HAP-1 (cell line): ENCODE measurements at regions of chr2 and their contacts with region 1.

Region 1: GRCh38 chr2:11411768-11412448 is 54.1 kb downstream of the E2F6 start:
- DNase-seq: peak; percentile 49 to 76
- H3K4me3 ChIP-seq: peak overlapping the region; percentile 19
- H3K4me1 ChIP-seq: no peaks in the 10 kb centered on the region
- H3K27me3 ChIP-seq: no peaks in the 10 kb centered on the region

Region 2: DNA sequence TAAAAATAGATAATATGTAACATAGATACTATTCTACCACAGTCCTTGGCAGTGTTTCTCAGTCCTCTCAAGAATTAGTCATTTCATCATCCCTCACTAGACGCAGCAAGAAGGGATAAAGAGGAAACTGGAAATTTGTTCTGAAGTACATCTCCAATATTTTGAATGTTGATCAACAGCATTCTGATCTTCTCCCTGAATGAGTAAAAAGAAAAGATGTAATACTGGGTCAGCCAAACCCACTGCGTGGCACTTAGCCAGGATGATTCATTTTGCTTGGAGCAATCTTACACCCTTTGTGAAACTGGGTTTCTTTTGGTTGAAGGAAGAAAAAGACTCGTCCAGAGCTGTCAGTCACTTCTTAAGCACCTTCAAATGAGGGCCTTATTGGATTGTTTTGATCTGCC is 1514.6 kb before region 1 on chr2:
- in situ Hi-C with region 1: no loop called
- DNase-seq: peak; percentile 85 to 93
- H3K4me3 ChIP-seq: no peak overlapping the region
- H3K4me1 ChIP-seq: peaks cover 46% of the 10 kb centered on the region
- H3K27me3 ChIP-seq: no peaks in the 10 kb centered on the region

Region 3: GRCh38 chr2:10832203-10832936 is 579.5 kb before region 1 on chr2:
- in situ Hi-C with region 1: loop called (anchors 25 kb)
- DNase-seq: peak; percentile 82 to 88
- H3K4me3 ChIP-seq: no peak overlapping the region
- H3K4me1 ChIP-seq: peaks cover 6% of the 10 kb centered on the region
- H3K27me3 ChIP-seq: peaks cover 34% of the 10 kb centered on the region

Region 4: GRCh38 chr2:10971881-10972260 is 440.0 kb before region 1 on chr2:
- in situ Hi-C with region 1: no loop called
- DNase-seq: no peak
- H3K4me3 ChIP-seq: no peak overlapping the region
- H3K4me1 ChIP-seq: peaks cover 11% of the 10 kb centered on the region
- H3K27me3 ChIP-seq: no peaks in the 10 kb centered on the region

Region 5: GRCh38 chr2:11234309-11234708 is 177.6 kb before region 1 on chr2:
- in situ Hi-C with region 1: loop called (anchors 25 kb)
- DNase-seq: no peak
- H3K4me3 ChIP-seq: no peak overlapping the region
- H3K4me1 ChIP-seq: no peaks in the 10 kb centered on the region
- H3K27me3 ChIP-seq: no peaks in the 10 kb centered on the region